ENCODE measurements at regions of chr6 and their contacts with region 1.

Region 1: GRCh38 chr6:33014841-33015634 is 5.6 kb upstream of the HLA-DOA start:
- DNase-seq: peak in 3 of 5 donors; percentile 23 to 62 (median 57)
- ATAC-seq: peak in 3 of 4 donors; percentile 55 to 66 (median 64)
- H3K4me3 ChIP-seq: peak overlapping the region in 2 of 12 donors; percentile 1 to 19
- H3K27ac ChIP-seq: peak overlapping the region in 11 of 12 donors; percentile 4 to 87 (median 44)
- H3K4me1 ChIP-seq: peaks cover 0 to 60% (median 27%) of the 10 kb centered on the region in 12 donors
- H3K27me3 ChIP-seq: peaks cover 0 to 22% (median 4%) of the 10 kb centered on the region in 9 donors
- CTCF ChIP-seq: peak; percentile 79 to 91 (median 83)
- POLR2A ChIP-seq: no peak

Region 2: GRCh38 chr6:33029328-33030184 is 14.5 kb after region 1 on chr6:
- intact Hi-C with region 1: loop called in 1 of 10 experiments (anchors 1 kb)
- DNase-seq: peak in 3 of 5 donors; percentile 48 to 70 (median 61)
- ATAC-seq: peak; percentile 90 to 99 (median 94)
- H3K4me3 ChIP-seq: no peak overlapping the region
- H3K27ac ChIP-seq: peak overlapping the region; percentile 39 to 95 (median 81)
- H3K4me1 ChIP-seq: peaks cover 0 to 33% (median 0%) of the 10 kb centered on the region in 12 donors
- H3K27me3 ChIP-seq: peaks cover 0 to 5% (median 0%) of the 10 kb centered on the region in 9 donors
- CTCF ChIP-seq: no peak
- POLR2A ChIP-seq: no peak

Region 3: GRCh38 chr6:33075568-33076405 is 60.7 kb after region 1 on chr6 and contains the start of gene HLA-DPB1:
- intact Hi-C with region 1: loop called in 6 of 10 experiments (anchors 1 to 5 kb)
- DNase-seq: peak in 2 of 5 donors; percentile 27 to 37
- ATAC-seq: peak; percentile 76 to 87 (median 80)
- H3K4me3 ChIP-seq: peak within 1 kb of the TSS in 11 of 12 donors; percentile 6 to 81 (median 56)
- H3K27ac ChIP-seq: peak within 1 kb of the TSS; percentile 28 to 94 (median 78)
- H3K4me1 ChIP-seq: peaks cover 0 to 63% (median 6%) of the 10 kb centered on the region in 12 donors
- H3K27me3 ChIP-seq: no peaks in the 10 kb centered on the region
- CTCF ChIP-seq: no peak
- POLR2A ChIP-seq: no peak
- total RNA-seq, gene HLA-DPB1: 16.6 to 346 (median 30.7) TPM

Region 4: DNA sequence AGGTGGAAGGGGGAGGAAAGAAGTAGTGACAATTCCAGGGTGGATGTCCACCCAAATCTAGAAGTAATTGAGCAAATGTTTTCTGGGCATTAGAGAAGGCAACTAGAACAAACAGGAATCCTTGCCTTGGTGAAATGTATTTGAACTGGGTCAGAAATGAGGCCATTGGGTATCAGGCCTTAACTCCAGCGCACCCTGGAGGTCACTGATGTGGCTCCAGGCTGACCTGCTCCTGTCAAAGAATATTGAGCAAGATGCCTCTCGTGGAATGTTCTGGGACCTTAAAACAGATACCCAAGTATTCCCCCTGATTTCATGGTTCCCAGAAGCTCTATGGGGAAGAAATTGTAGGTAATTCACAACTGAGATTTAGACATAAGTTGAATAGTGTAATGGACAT is 67.7 kb after region 1 on chr6:
- intact Hi-C with region 1: loop called in 9 of 10 experiments (anchors 1 to 5 kb)
- DNase-seq: no peak
- ATAC-seq: peak in 1 of 4 donors; percentile 70
- H3K4me3 ChIP-seq: no peak overlapping the region
- H3K27ac ChIP-seq: no peak overlapping the region
- H3K4me1 ChIP-seq: peaks cover 0 to 52% (median 18%) of the 10 kb centered on the region in 12 donors
- H3K27me3 ChIP-seq: no peaks in the 10 kb centered on the region
- CTCF ChIP-seq: peak in 11 of 12 donors; percentile 27 to 73 (median 49)
- POLR2A ChIP-seq: no peak

Region 5: DNA sequence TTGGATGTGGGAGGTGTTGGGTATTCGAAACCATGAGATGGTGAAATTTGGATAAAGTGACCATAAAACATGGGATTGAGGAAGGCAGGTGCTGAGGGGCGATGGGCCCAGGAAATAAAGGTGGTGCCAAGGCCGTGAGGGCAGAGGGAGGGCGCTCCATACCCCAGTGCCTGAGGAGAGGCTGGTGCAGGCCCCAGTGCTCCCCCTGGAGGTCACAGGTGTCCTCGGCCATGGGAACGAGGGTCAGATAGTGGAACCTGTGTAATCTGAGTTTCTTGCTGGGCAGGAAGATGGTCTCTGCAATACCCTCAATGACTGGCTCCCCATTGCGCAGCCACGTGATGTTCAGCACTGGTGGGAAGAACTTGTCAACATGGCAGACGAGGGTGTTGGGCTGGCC is 76.9 kb after region 1 on chr6:
- intact Hi-C with region 1: loop called in 3 of 10 experiments (anchors 1 to 5 kb)
- DNase-seq: peak in 1 of 5 donors; percentile 75
- ATAC-seq: peak in 3 of 4 donors; percentile 20 to 54 (median 54)
- H3K4me3 ChIP-seq: no peak overlapping the region
- H3K27ac ChIP-seq: no peak overlapping the region
- H3K4me1 ChIP-seq: peaks cover 0 to 6% (median 0%) of the 10 kb centered on the region in 12 donors
- H3K27me3 ChIP-seq: peaks cover 0 to 11% (median 0%) of the 10 kb centered on the region in 9 donors
- CTCF ChIP-seq: peak in 11 of 12 donors; percentile 18 to 64 (median 53)
- POLR2A ChIP-seq: no peak

Region 6: GRCh38 chr6:33132081-33132524 is 117.1 kb after region 1 on chr6:
- intact Hi-C with region 1: no loop called
- DNase-seq: no peak
- ATAC-seq: no peak
- H3K4me3 ChIP-seq: no peak overlapping the region
- H3K27ac ChIP-seq: peak overlapping the region in 1 of 12 donors; percentile 32
- H3K4me1 ChIP-seq: no peaks in the 10 kb centered on the region
- H3K27me3 ChIP-seq: peaks cover 0 to 20% (median 0%) of the 10 kb centered on the region in 9 donors
- CTCF ChIP-seq: no peak
- POLR2A ChIP-seq: no peak

Region 7: DNA sequence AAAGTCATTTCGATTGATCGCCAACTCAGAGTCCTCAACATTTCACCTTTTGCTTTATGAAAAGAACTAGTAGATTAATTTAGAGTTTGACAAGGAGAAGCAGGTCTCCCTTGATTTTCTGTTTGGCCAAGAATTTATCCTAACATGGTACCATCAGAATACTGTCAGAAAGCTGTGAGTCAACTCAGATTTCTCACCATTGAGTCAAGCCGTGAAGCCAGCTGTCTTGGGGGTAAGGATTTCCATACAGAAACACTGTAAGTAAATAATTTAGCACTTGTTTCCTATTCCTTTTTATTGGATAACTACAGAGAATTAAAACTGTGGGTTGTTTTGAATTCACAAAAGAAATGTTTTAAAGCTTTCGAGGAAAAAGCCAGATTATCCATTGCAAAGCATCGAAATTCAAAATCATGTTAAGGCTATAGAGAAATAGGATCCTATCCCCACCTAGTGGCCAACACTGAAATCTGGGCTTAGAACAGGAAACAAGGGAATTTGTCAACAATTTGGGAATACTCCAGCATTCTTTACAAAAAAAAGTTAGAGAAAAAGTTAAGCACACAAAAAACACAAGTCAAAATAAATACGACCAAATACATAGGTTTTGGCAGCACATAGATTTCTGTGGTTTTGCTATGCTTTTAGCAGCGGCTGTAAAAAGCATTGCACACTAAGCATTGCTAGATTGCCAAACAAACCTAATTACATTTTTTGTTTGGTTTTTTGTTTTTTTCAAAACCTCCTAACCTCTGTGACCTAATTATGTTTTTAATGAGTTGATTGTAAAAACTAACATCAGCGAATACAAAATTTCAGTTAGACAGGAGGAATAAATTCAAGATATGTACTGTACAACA is 133.0 kb after region 1 on chr6:
- intact Hi-C with region 1: loop called in 5 of 10 experiments (anchors 1 to 5 kb)
- DNase-seq: no peak
- ATAC-seq: peak in 1 of 4 donors; percentile 54
- H3K4me3 ChIP-seq: no peak overlapping the region
- H3K27ac ChIP-seq: no peak overlapping the region
- H3K4me1 ChIP-seq: peaks cover 0 to 7% (median 0%) of the 10 kb centered on the region in 12 donors
- H3K27me3 ChIP-seq: peaks cover 0 to 15% (median 4%) of the 10 kb centered on the region in 9 donors
- CTCF ChIP-seq: peak; percentile 58 to 93 (median 72)
- POLR2A ChIP-seq: no peak

Region 8: GRCh38 chr6:33344701-33345697 is 330.0 kb after region 1 on chr6:
- intact Hi-C with region 1: no loop called
- DNase-seq: peak in 3 of 5 donors; percentile 57 to 75 (median 66)
- ATAC-seq: peak in 3 of 4 donors; percentile 49 to 51 (median 49)
- H3K4me3 ChIP-seq: peak overlapping the region in 3 of 12 donors; percentile 4 to 18 (median 6)
- H3K27ac ChIP-seq: peak overlapping the region in 1 of 12 donors; percentile 66
- H3K4me1 ChIP-seq: peaks cover 0 to 10% (median 2%) of the 10 kb centered on the region in 12 donors
- H3K27me3 ChIP-seq: no peaks in the 10 kb centered on the region
- CTCF ChIP-seq: peak; percentile 42 to 69 (median 60)
- POLR2A ChIP-seq: no peak

Region 9: GRCh38 chr6:33445119-33445603 is 430.1 kb after region 1 on chr6:
- intact Hi-C with region 1: no loop called
- DNase-seq: no peak
- ATAC-seq: no peak
- H3K4me3 ChIP-seq: no peak overlapping the region
- H3K27ac ChIP-seq: peak overlapping the region in 1 of 12 donors; percentile 71
- H3K4me1 ChIP-seq: peaks cover 0 to 33% (median 0%) of the 10 kb centered on the region in 12 donors
- H3K27me3 ChIP-seq: no peaks in the 10 kb centered on the region
- CTCF ChIP-seq: no peak
- POLR2A ChIP-seq: no peak